CD4-positive, alpha-beta memory T cell (primary cell): ENCODE measurements at regions of chr19 and their contacts with region 1.

Region 1: GRCh38 chr19:610801-611505 is 21.3 kb downstream of the HCN2 start:
- DNase-seq: peak; percentile 50 to 83 (median 69)
- H3K4me3 ChIP-seq: peak overlapping the region; percentile 39 to 71
- H3K4me3 Mint-ChIP-seq: peak overlapping the region; percentile 86 to 99 (median 94)
- H3K27ac ChIP-seq: peak overlapping the region; percentile 51
- H3K27ac Mint-ChIP-seq: peak overlapping the region; percentile 87 to 100 (median 96)
- H3K4me1 ChIP-seq: peaks cover 25% of the 10 kb centered on the region
- H3K4me1 Mint-ChIP-seq: peaks cover 9 to 41% (median 24%) of the 10 kb centered on the region in 4 donors
- H3K27me3 ChIP-seq: no peaks in the 10 kb centered on the region
- H3K27me3 Mint-ChIP-seq: peaks cover 0 to 2% of the 10 kb centered on the region in 2 donors

Region 2: DNA sequence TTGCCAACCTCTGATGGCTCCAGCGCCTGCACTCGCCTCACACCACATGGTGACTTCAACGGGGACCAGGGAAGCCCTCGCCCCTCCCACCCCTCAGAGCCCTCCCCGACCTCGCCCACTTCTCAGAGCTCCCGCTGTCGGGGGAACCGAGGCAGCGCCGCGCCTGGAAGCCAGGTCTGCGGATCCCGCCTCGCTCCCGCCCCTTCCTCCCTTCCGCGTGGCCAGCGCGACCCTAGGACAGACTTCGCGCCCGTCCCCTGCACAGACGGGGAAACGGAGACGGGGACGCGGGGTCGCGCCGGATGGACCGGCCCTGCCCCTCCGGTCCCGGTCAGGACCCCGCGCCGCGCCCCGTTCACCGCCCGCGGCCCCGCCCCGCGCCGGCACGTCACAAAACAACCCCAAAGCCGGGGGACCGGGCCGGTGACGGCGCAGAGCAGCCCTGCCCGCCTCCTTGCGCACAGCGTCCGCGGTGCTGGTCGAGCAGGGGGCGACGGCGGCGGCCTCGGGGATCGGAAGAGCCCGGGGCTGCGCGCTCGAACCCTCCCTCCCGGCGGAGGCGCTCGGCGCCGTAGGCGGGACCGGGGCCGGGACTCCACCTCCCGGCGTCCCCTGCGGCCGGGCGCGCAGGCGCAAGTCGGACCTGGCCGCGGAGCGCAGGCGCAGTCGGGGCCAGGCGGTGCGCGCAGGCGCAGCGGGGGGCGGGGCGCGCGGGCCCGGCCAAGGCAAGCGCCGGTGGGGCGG is 79.8 kb before region 1 on chr19:
- CTCF ChIA-PET with region 1: no interaction called
- POLR2A ChIA-PET with region 1: interaction called, 5 read pairs
- intact Hi-C with region 1: loop called (anchors 5 kb)
- DNase-seq: peak; percentile 79 to 98 (median 92)
- H3K4me3 ChIP-seq: peak overlapping the region in 1 of 2 donors; percentile 61
- H3K4me3 Mint-ChIP-seq: peak overlapping the region; percentile 79 to 87 (median 84)
- H3K27ac ChIP-seq: peak overlapping the region; percentile 81
- H3K27ac Mint-ChIP-seq: peak overlapping the region; percentile 58 to 93 (median 88)
- H3K4me1 ChIP-seq: peaks cover 27% of the 10 kb centered on the region
- H3K4me1 Mint-ChIP-seq: peaks cover 6 to 24% (median 10%) of the 10 kb centered on the region in 4 donors
- H3K27me3 ChIP-seq: no peaks in the 10 kb centered on the region
- H3K27me3 Mint-ChIP-seq: peaks cover 0 to 3% of the 10 kb centered on the region in 2 donors

Region 3: GRCh38 chr19:588093-588740 is 22.7 kb before region 1 on chr19:
- CTCF ChIA-PET with region 1: interaction called, 4 read pairs
- POLR2A ChIA-PET with region 1: interaction called, 7 read pairs
- intact Hi-C with region 1: loop called (anchors 2 kb)
- DNase-seq: peak; percentile 57 to 81 (median 62)
- H3K4me3 ChIP-seq: no peak overlapping the region
- H3K4me3 Mint-ChIP-seq: peak overlapping the region in 4 of 8 donors; percentile 42 to 65 (median 52)
- H3K27ac ChIP-seq: no peak overlapping the region
- H3K27ac Mint-ChIP-seq: peak overlapping the region in 1 of 7 donors; percentile 59
- H3K4me1 ChIP-seq: peaks cover 19% of the 10 kb centered on the region
- H3K4me1 Mint-ChIP-seq: peaks cover 3 to 14% (median 6%) of the 10 kb centered on the region in 4 donors
- H3K27me3 ChIP-seq: peaks cover 6% of the 10 kb centered on the region
- H3K27me3 Mint-ChIP-seq: peaks cover 6 to 7% of the 10 kb centered on the region in 2 donors

Region 4: DNA sequence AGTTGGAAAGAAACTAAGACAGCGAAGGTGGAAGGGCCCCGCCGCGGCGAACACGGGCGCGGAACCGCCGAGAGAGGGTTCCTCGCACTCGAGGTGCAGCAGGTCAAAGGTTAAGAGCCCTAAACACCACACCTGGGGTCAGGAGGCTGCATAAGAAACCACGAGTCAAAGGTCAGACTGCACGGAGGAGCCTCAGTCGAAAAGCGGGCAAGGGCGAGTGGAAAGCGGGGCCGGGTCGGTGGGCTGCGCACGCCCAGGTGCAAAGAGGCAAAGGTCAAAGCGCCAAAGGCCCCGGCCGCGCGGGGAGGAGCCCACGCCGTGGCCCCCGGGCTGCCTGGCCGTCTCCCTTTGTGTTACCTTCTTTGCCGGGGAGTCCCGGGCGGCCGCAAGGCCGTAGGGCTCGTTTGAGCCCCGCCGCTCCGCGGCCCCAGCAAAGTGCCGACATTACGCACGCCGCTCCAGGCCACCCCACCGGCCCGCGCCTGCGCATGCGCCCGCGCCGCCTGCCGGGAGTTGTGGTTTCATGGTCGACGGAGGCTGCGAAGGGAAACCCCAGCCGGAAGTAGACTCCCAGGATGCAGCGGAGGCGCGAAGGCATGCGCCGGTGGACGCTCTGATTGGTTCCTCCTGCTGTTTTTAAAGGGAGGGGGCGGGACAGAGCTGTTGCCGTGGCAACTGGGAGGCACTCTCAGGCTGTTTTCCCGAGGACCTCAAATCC is 22.3 kb after region 1 on chr19 and contains the start of gene POLRMT:
- CTCF ChIA-PET with region 1: interaction called, 3 read pairs
- POLR2A ChIA-PET with region 1: interaction called, 19 read pairs
- intact Hi-C with region 1: loop called (anchors 1 kb)
- DNase-seq: peak; percentile 94 to 96 (median 96)
- H3K4me3 ChIP-seq: peak within 1 kb of the TSS; percentile 61 to 86
- H3K4me3 Mint-ChIP-seq: peak within 1 kb of the TSS; percentile 90 to 98 (median 96)
- H3K27ac ChIP-seq: peak within 1 kb of the TSS; percentile 71
- H3K27ac Mint-ChIP-seq: peak within 1 kb of the TSS; percentile 94 to 98 (median 97)
- H3K4me1 ChIP-seq: peaks cover 22% of the 10 kb centered on the region
- H3K4me1 Mint-ChIP-seq: peaks cover 2 to 49% (median 24%) of the 10 kb centered on the region in 4 donors
- H3K27me3 ChIP-seq: no peaks in the 10 kb centered on the region
- H3K27me3 Mint-ChIP-seq: no peaks in the 10 kb centered on the region
- total RNA-seq, gene POLRMT: 98.9 to 103 TPM